K562 (cell line): ENCODE measurements at regions of chr19 and their contacts with region 1.

Region 1: DNA sequence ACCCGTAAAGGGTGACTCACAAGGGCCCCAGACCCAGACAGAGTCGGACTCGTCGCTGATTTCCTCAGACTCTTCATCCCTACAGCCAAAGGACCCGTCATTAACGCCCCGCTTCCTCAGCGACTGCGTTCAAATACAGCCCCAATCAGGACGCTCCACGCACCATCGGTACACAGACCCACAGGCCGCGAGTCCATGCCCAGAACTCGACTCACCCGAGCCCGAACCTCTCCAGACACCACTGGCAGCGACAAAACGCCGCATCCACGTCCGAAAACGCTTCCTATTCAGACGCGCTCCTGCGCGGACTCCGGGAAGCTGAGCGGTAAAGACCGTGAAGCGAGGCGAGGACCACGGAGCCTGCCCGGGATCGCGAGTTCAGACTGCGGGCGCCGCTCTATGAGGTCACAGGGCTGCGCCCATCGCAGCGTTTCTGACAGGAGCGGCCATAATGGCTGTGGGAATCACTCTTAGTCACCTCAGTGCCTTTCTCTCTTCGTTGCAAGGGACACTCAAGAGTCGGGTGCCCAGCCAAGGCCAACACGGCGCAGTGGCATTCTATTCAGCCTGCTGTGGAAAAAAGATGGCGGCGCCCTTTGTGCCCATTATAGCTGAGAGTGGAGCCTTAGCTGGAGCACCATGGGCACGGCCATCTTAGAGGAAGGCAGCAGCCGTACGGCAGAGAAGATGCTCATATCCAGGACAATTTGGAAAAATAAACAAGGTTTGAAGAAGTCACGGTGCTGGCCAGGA is at the start of gene ZNF614:
- DNase-seq: peak; percentile 87 to 91 (median 88)
- ATAC-seq: peak; percentile 98
- H3K4me3 ChIP-seq: peak within 1 kb of the TSS; percentile 64
- H3K27ac ChIP-seq: peak within 1 kb of the TSS; percentile 90
- H3K4me1 ChIP-seq: peaks cover 0 to 4% of the 10 kb centered on the region in 2 experiments; a peak in 2 of 5 replicates
- H3K27me3 ChIP-seq: no peaks in the 10 kb centered on the region
- CTCF ChIP-seq: no peak
- EP300 ChIP-seq: peak; percentile 31; the same call in 1 of the 2 replicates
- POLR2A ChIP-seq: peak; percentile 94
- RAD21 ChIP-seq: no peak
- polyA plus RNA-seq, gene ZNF614: 7.2 to 9.4 TPM

Region 2: GRCh38 chr19:51986309-51987291 is 41.6 kb before region 1 on chr19 and contains the start of gene ZNF350:
- CTCF ChIA-PET with region 1: no interaction called
- POLR2A ChIA-PET with region 1: no interaction called
- in situ Hi-C with region 1: no loop called
- intact Hi-C with region 1: no loop called
- DNase-seq: peak; percentile 63 to 91 (median 68)
- ATAC-seq: peak; percentile 97
- H3K4me3 ChIP-seq: peak within 1 kb of the TSS; percentile 61
- H3K27ac ChIP-seq: peak within 1 kb of the TSS; percentile 76
- H3K4me1 ChIP-seq: no peaks in the 10 kb centered on the region
- H3K27me3 ChIP-seq: no peaks in the 10 kb centered on the region
- CTCF ChIP-seq: no peak
- EP300 ChIP-seq: no peak
- POLR2A ChIP-seq: peak; percentile 54
- RAD21 ChIP-seq: no peak
- polyA plus RNA-seq, gene ZNF350: 3.4 to 4.8 TPM

Region 3: DNA sequence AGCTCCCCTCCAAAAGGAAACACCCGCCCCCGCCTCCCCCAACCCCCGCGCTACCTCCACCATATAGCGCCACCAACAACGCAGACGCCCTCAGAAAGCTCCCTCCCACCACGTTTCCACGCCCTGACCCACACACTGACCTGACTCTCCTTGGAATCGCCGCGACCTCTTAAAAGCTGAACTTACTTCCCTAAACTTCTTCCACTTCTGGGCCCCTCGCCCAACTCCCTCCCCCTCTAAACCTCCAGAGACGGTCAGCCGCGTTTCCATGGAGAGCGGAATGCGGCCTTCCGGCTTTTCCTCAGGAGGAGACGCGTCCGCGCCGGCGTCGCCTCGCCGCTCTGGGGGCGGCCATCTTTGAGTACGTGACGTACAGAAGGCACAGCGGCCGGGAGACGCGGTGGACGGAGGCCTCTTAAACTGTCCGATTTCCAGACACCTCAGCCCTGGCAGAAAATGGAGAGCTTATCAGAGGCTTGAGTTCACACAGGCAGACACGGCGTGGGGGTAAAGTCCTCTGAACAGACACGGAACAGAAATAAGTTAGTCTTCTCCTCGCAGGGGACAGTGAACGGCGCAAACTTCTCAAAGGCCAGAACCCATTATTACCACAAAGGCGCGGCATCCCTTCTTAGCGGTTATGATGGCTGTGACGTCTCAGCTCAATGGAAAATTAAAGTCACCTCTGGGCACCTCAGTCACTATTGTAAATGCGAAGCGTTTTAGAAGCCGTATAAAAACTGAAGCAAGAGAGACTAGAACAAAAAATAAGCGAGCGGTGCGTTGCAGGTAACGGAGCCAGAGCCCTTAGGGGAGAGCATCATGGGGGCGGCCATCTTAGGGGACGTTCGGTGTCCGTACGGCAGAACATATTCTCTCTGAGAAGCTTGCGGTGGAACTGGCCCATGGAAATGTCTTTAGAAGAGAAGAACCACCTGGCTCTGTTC is 20.6 kb after region 1 on chr19 and contains the start of gene ZNF432:
- CTCF ChIA-PET with region 1: no interaction called
- POLR2A ChIA-PET with region 1: interaction called, 6 read pairs
- in situ Hi-C with region 1: no loop called
- intact Hi-C with region 1: loop called (anchors 1 kb)
- DNase-seq: peak; percentile 85 to 96 (median 88)
- ATAC-seq: peak; percentile 98
- H3K4me3 ChIP-seq: peak within 1 kb of the TSS; percentile 55
- H3K27ac ChIP-seq: peak within 1 kb of the TSS; percentile 87
- H3K4me1 ChIP-seq: peaks cover 2 to 3% of the 10 kb centered on the region in 2 experiments; a peak in 2 of 5 replicates
- H3K27me3 ChIP-seq: no peaks in the 10 kb centered on the region
- CTCF ChIP-seq: no peak
- EP300 ChIP-seq: no peak
- POLR2A ChIP-seq: peak; percentile 79
- RAD21 ChIP-seq: no peak
- polyA plus RNA-seq, gene ZNF432: 2.8 to 3.5 TPM